ENCODE measurements at regions of chr13 and their contacts with region 1.

Region 1: DNA sequence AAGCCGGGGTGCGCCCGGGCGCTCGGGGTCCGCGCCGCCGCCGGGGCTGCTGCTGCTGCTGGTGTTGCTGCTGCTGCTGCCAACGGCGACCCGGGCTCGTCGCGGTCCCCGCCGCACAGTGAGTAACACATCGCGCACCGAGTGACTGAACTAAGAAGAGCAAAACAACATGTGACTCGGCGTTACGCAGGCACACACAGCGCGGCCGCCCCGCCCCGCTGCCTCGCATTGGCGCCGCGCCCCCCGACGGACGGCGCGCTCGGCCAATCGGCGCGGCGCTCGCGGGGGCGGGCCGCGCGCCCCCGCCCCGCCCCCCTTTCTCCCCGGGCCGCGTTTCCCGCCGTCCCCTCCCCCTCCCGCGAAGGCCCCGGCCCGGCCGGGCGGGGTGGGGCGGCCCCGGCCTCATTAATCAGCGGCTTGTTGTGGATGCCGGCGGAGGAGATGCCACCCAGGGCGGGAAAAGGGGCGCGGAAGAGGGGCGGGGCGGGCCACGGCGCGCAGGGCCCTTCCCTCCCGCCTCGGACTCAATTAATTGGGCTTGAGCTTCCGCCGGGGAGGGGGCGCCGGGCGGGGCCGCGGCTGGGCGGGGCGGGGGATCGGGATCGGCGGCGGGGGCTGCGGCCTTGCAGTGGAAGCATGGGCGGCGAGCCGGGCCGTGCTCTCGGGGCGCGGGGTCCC is at the start of gene IRS2:
- DNase-seq: peak; percentile 94
- H3K4me3 Mint-ChIP-seq: peak within 1 kb of the TSS; percentile 77
- H3K27ac Mint-ChIP-seq: peak within 1 kb of the TSS; percentile 61
- H3K4me1 Mint-ChIP-seq: peaks cover 19% of the 10 kb centered on the region
- H3K27me3 Mint-ChIP-seq: peaks cover 5% of the 10 kb centered on the region
- total RNA-seq, gene IRS2: 3.0 to 3.3 TPM

Region 2: DNA sequence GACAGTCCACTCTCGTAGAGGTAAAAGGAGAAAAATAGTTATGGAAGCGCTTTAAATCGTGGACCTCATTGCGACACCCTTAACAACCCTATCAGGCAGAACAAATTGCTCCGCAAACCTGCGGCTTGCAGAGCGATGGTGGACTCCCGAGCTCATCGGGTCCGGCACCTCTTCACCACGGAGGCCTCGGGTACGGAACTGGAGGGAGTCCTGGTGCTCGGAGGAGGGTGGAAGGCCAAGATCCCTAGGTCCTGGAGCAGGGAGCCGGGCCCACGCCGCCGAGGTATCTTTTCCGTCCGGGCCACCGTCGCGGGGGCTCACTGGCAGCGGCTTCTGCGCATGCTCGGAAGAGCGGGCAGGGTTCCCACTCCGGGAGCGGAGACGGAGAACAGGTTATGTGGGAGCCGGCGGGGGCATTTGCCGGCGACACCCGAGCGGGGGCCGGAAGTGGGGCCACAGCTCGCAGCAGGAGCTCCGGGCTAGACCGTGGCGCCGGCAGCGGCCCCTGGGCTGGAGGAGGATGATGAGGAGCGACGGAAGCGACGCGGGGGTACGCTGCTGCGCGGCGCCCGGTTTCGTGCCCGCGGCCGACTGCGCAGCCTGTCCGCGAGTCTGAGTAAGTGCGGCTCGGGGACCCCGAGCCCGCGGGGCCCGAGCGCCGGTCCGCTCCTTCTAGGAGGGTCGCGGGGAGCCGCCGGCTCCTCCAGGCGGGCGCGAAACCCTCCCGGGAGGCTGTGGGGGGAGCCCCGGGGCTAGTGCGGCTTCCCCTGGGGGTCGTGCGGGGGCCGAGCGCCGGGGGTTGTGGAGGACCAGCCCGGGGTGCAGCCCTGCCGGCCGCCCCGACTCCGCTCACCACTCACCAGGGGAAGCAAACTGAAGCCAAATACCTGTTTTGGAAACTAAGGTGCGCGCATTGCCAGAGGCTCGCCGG is 1568.3 kb before region 1 on chr13 and contains the start of gene ABHD13:
- CTCF ChIA-PET with region 1: no interaction called
- intact Hi-C with region 1: loop called (anchors 1 kb)
- DNase-seq: peak; percentile 87
- H3K4me3 Mint-ChIP-seq: peak within 1 kb of the TSS; percentile 90
- H3K27ac Mint-ChIP-seq: peak within 1 kb of the TSS; percentile 94
- H3K4me1 Mint-ChIP-seq: peaks cover 48% of the 10 kb centered on the region
- H3K27me3 Mint-ChIP-seq: no peaks in the 10 kb centered on the region
- total RNA-seq, gene ABHD13: 3.4 to 3.8 TPM

Region 3: GRCh38 chr13:108961542-108962125 is 825.0 kb before region 1 on chr13:
- CTCF ChIA-PET with region 1: interaction called, 4 read pairs
- intact Hi-C with region 1: loop called (anchors 1 kb)
- DNase-seq: no peak
- H3K4me3 Mint-ChIP-seq: no peak overlapping the region
- H3K27ac Mint-ChIP-seq: no peak overlapping the region
- H3K4me1 Mint-ChIP-seq: no peaks in the 10 kb centered on the region
- H3K27me3 Mint-ChIP-seq: peaks cover 4% of the 10 kb centered on the region

Region 4: GRCh38 chr13:109427148-109427547 is 359.4 kb before region 1 on chr13:
- CTCF ChIA-PET with region 1: no interaction called
- intact Hi-C with region 1: loop called (anchors 5 kb)
- DNase-seq: no peak
- H3K4me3 Mint-ChIP-seq: no peak overlapping the region
- H3K27ac Mint-ChIP-seq: no peak overlapping the region
- H3K4me1 Mint-ChIP-seq: peaks cover 12% of the 10 kb centered on the region
- H3K27me3 Mint-ChIP-seq: peaks cover 10% of the 10 kb centered on the region

Region 5: DNA sequence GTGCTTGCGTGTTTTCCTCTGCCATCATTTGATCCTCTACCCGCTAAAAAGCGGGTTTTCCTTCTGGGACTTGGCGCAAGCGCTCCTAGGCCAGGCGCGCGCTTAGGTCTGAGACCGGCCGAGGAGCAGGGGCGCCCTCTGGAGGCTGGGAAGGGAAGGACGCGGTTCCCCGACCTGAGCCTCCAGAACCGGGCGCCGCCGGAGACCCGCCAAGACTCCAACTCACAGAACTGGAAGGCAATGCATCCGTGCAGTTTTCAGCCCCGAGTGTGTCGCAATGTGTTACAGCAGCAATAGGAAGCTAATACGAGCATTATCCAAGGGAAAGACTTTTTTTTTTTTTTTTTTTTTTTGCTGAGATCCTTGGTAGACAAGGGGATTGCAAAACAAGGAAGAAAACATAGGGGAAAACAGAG is 329.5 kb after region 1 on chr13:
- CTCF ChIA-PET with region 1: interaction called, 3 read pairs
- intact Hi-C with region 1: loop called (anchors 1 kb)
- DNase-seq: peak; percentile 67
- H3K4me3 Mint-ChIP-seq: no peak overlapping the region
- H3K27ac Mint-ChIP-seq: no peak overlapping the region
- H3K4me1 Mint-ChIP-seq: peaks cover 2% of the 10 kb centered on the region
- H3K27me3 Mint-ChIP-seq: peaks cover 32% of the 10 kb centered on the region

Region 6: GRCh38 chr13:110421696-110422385 is 635.2 kb after region 1 on chr13:
- CTCF ChIA-PET with region 1: no interaction called
- intact Hi-C with region 1: loop called (anchors 5 kb)
- DNase-seq: peak; percentile 51
- H3K4me3 Mint-ChIP-seq: no peak overlapping the region
- H3K27ac Mint-ChIP-seq: no peak overlapping the region
- H3K4me1 Mint-ChIP-seq: peaks cover 23% of the 10 kb centered on the region
- H3K27me3 Mint-ChIP-seq: peaks cover 87% of the 10 kb centered on the region